ENCODE measurements at regions of chr16 and their contacts with region 1.

Region 1: GRCh38 chr16:23640931-23641765 is at the starts of genes DCTN5 and PALB2:
- DNase-seq: peak; percentile 81
- ATAC-seq: peak; percentile 94
- H3K4me3 Mint-ChIP-seq: peak within 1 kb of the TSS; percentile 98
- H3K27ac Mint-ChIP-seq: peak within 1 kb of the TSS; percentile 97
- H3K4me1 Mint-ChIP-seq: peaks cover 37% of the 10 kb centered on the region
- H3K27me3 Mint-ChIP-seq: no peaks in the 10 kb centered on the region
- CTCF ChIP-seq: no peak
- total RNA-seq, gene DCTN5: 62.8 and 64.1 TPM in 2 replicates
- total RNA-seq, gene PALB2: 16.0 and 19.8 TPM in 2 replicates

Region 2: GRCh38 chr16:23518435-23518891 is 122.7 kb before region 1 on chr16:
- CTCF ChIA-PET with region 1: no interaction called
- POLR2A ChIA-PET with region 1: no interaction called
- intact Hi-C with region 1: loop called (anchors 2 kb)
- DNase-seq: no peak
- ATAC-seq: peak; percentile 59
- H3K4me3 Mint-ChIP-seq: peak overlapping the region; percentile 64
- H3K27ac Mint-ChIP-seq: peak overlapping the region; percentile 86
- H3K4me1 Mint-ChIP-seq: peaks cover 68% of the 10 kb centered on the region
- H3K27me3 Mint-ChIP-seq: no peaks in the 10 kb centered on the region
- CTCF ChIP-seq: no peak

Region 3: GRCh38 chr16:23670137-23670776 is 29.1 kb after region 1 on chr16:
- CTCF ChIA-PET with region 1: no interaction called
- POLR2A ChIA-PET with region 1: interaction called, 3 read pairs
- intact Hi-C with region 1: loop called (anchors 1 kb)
- DNase-seq: no peak
- ATAC-seq: peak; percentile 96
- H3K4me3 Mint-ChIP-seq: peak overlapping the region; percentile 56
- H3K27ac Mint-ChIP-seq: peak overlapping the region; percentile 6
- H3K4me1 Mint-ChIP-seq: peaks cover 24% of the 10 kb centered on the region
- H3K27me3 Mint-ChIP-seq: no peaks in the 10 kb centered on the region
- CTCF ChIP-seq: no peak

Region 4: DNA sequence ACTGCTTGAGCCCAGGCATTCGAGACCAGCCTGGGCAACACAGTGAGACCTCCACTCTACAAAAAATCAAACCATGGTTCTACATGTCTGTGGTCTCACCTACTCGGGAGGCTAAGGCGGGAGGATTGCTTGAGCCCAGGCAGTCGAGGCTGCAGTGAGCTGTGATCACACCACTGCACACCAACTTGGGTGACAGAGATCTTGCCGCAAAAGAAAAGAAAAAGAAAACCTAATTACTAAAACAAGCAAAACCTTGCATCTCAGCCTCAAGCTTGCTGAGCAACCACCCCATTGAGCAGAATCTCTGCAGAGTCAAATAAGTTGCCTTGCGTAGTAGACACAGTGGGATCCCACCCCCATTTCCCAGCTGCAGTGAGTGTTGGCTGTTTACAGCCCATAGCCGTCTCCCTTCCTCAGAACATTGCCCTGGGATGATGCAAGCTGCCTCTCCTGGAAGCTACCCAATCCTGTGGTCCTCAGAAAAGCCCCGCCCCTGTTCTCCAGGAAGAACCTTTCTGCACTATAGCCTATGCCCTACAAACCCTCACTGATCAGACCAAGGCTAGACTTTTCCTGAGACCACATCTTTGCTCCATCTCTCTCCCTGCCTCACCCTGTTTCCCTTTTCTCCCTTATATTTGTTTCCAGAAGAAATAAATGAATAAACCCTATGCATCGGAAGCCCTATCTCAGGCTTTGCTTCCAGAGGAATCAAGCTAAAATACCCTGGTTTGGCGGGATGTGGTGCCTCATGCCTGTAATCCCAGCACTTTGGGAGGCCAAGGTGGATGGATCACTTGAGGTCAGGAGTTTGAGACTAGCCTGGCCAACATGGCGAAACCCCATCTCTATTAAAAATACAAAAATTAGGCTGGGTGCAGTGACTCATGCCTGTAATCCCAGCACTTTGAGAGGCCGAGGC is 88.6 kb after region 1 on chr16:
- CTCF ChIA-PET with region 1: no interaction called
- POLR2A ChIA-PET with region 1: no interaction called
- intact Hi-C with region 1: loop called (anchors 10 kb)
- DNase-seq: no peak
- ATAC-seq: no peak
- H3K4me3 Mint-ChIP-seq: no peak overlapping the region
- H3K27ac Mint-ChIP-seq: no peak overlapping the region
- H3K4me1 Mint-ChIP-seq: peaks cover 3% of the 10 kb centered on the region
- H3K27me3 Mint-ChIP-seq: peaks cover 11% of the 10 kb centered on the region
- CTCF ChIP-seq: no peak

Region 5: GRCh38 chr16:23754594-23755483 is 113.7 kb after region 1 on chr16 and contains the start of gene CHP2:
- CTCF ChIA-PET with region 1: no interaction called
- POLR2A ChIA-PET with region 1: no interaction called
- intact Hi-C with region 1: no loop called
- DNase-seq: peak; percentile 21
- ATAC-seq: no peak
- H3K4me3 Mint-ChIP-seq: peak within 1 kb of the TSS; percentile 26
- H3K27ac Mint-ChIP-seq: no peak within 1 kb of the TSS
- H3K4me1 Mint-ChIP-seq: peaks cover 10% of the 10 kb centered on the region
- H3K27me3 Mint-ChIP-seq: peaks cover 49% of the 10 kb centered on the region
- CTCF ChIP-seq: no peak
- total RNA-seq, gene CHP2: not detected in 2 replicates

Region 6: GRCh38 chr16:24729362-24729984 is 1088.3 kb after region 1 on chr16 and contains the start of gene TNRC6A:
- CTCF ChIA-PET with region 1: no interaction called
- POLR2A ChIA-PET with region 1: no interaction called
- intact Hi-C with region 1: loop called (anchors 1 kb)
- DNase-seq: peak; percentile 90
- ATAC-seq: peak; percentile 79
- H3K4me3 Mint-ChIP-seq: peak within 1 kb of the TSS; percentile 99
- H3K27ac Mint-ChIP-seq: peak within 1 kb of the TSS; percentile 97
- H3K4me1 Mint-ChIP-seq: peaks cover 38% of the 10 kb centered on the region
- H3K27me3 Mint-ChIP-seq: no peaks in the 10 kb centered on the region
- CTCF ChIP-seq: no peak
- total RNA-seq, gene TNRC6A: 57.9 and 68.5 TPM in 2 replicates

Measured in activated B cell treated with CpG ODN at 0.5 μM for 24 hours (primary cell).